Right ventricle myocardium inferior (tissue), 1 donor: ENCODE measurements at regions of chr12 and their contacts with region 1.

Region 1: DNA sequence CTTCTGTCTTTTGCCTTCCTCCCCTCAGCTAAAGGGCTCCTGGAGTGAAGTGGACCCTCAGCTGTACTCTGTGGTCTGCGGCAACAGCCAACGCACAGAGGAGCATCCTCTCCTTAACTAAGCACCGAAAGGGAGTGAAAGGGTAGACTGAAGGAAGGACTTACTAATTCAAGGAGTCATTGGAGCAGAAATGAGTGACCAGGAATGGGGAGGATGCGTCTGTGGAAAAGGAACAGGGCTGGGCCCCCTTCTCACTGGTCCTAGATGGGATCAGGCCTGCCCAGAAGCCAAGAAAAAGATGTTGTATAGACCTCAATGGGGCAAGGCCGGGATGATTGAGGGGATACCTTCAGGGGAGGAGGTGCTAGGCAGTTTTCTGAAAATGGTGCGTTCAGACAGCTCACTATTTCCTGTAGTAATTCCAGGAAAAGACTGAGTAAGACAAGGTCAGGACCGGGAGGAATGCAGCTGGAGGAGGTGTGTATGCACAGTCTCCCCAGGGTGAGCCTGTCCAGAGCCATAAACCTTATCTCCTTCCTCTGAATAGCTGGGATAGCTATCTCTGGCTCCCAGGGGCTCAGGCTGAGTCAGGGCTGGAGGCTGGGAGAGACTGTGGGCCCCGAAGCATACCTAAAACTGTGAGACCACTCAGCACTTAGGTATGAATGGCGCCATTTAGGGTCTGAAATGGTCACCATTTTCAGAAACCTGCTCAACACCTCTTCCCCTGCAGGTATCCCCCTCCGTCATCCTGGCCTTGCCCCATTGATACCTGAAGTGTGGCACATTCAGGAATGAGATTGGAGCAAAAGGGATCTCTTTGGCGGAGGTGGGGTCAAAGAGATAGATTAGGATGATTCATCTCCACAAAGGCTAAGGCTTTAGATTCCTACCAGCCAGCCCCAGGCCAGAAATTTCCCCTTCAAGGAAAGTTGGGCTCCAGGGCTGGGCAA is 20.2 kb upstream of the KRT8 start:
- DNase-seq: no peak
- ATAC-seq: no peak

Region 2: DNA sequence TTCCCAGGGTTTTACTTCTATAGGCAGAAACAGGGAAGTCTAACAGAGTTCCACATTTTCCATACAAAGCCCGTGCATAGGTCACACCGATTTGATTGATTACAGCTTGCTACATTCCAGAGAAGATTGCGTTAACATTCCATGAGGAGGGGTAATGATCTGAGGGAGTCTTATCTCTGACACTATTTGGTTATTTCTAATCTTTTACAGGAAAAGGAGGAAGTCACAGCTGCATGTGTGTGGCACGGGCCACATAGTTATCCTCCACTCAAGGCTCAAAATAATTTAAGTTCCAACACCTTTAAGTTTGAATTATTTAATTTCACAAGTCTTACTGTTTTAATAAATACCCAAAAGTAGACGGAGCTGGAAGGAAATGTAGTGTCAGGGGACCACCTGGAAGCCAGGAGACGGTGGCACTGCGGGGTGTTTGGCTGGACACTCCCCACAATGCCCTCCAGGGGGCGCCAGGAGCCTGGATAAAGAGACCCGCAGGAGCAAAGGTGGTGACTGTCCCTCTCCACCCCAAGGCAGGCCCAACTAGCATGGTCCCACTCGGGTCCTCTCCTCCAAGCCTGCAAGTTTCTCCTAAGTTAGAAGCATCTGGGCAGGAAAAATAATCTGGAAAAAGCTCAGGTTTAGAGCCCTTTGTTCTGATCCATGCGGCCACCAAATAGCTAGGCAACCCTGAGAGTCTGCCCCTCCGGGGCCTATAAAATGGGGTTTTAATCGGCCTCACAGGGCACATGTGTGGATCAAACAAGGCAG is 40.3 kb before region 1 on chr12:
- intact Hi-C with region 1: loop called (anchors 5 kb)
- DNase-seq: peak; percentile 88
- ATAC-seq: peak; percentile 74